MCF 10A (cell line): ENCODE measurements at regions of chr3 and their contacts with region 1.

Region 1: GRCh38 chr3:141460097-141460704 is 26.6 kb upstream of the RASA2 start:
- DNase-seq: peak; percentile 88
- H3K4me3 Mint-ChIP-seq: no peak overlapping the region
- H3K27ac Mint-ChIP-seq: no peak overlapping the region
- H3K4me1 Mint-ChIP-seq: no peaks in the 10 kb centered on the region
- H3K27me3 Mint-ChIP-seq: no peaks in the 10 kb centered on the region
- CTCF ChIP-seq: peak; percentile 89

Region 2: GRCh38 chr3:141223673-141224166 is 236.5 kb before region 1 on chr3:
- CTCF ChIA-PET with region 1: no interaction called
- POLR2A ChIA-PET with region 1: no interaction called
- intact Hi-C with region 1: no loop called
- DNase-seq: no peak
- H3K4me3 Mint-ChIP-seq: no peak overlapping the region
- H3K27ac Mint-ChIP-seq: no peak overlapping the region
- H3K4me1 Mint-ChIP-seq: no peaks in the 10 kb centered on the region
- H3K27me3 Mint-ChIP-seq: no peaks in the 10 kb centered on the region
- CTCF ChIP-seq: no peak

Region 3: DNA sequence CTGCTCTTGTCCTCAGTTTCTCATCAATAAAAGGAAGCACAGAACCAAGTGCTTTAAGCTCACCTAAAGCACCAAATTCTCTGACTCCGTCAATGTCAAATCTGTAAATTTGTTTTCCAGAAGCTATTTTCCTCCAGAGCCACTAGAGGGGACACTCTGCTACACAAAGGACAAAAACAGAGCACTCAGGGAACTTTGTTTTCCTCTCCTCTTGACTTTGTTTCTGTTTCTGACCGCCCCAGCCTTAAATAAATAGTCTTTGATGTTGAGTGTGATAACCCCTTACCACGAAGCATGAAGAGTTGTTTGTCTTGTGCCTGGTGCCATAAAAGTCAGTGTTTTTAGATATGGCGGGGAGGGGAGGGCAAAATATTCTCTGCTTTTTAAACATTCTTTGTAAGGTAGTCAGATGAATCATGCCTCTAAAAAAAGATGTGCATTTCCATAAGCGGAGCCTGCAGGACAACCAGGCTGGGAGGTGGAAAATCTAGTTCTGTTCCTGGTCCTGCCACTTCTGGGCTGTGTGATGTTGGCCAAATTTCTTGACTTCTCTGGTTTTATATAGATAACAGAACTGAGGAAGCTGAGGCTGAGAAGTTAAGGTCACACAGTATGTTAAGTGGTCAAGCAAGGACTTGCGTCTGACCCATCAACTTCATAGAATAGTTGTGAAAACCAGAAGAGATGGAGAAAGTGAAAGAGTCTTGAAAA is 99.2 kb before region 1 on chr3:
- CTCF ChIA-PET with region 1: interaction called, 166 read pairs
- POLR2A ChIA-PET with region 1: interaction called, 17 read pairs
- intact Hi-C with region 1: no loop called
- DNase-seq: peak; percentile 83
- H3K4me3 Mint-ChIP-seq: peak overlapping the region; percentile 30
- H3K27ac Mint-ChIP-seq: peak overlapping the region; percentile 74
- H3K4me1 Mint-ChIP-seq: peaks cover 23% of the 10 kb centered on the region
- H3K27me3 Mint-ChIP-seq: no peaks in the 10 kb centered on the region
- CTCF ChIP-seq: peak; percentile 77

Region 4: GRCh38 chr3:141493184-141493583 is 33.0 kb after region 1 on chr3:
- CTCF ChIA-PET with region 1: interaction called, 16 read pairs
- POLR2A ChIA-PET with region 1: no interaction called
- intact Hi-C with region 1: no loop called
- DNase-seq: no peak
- H3K4me3 Mint-ChIP-seq: no peak overlapping the region
- H3K27ac Mint-ChIP-seq: no peak overlapping the region
- H3K4me1 Mint-ChIP-seq: peaks cover 25% of the 10 kb centered on the region
- H3K27me3 Mint-ChIP-seq: no peaks in the 10 kb centered on the region
- CTCF ChIP-seq: no peak

Region 5: DNA sequence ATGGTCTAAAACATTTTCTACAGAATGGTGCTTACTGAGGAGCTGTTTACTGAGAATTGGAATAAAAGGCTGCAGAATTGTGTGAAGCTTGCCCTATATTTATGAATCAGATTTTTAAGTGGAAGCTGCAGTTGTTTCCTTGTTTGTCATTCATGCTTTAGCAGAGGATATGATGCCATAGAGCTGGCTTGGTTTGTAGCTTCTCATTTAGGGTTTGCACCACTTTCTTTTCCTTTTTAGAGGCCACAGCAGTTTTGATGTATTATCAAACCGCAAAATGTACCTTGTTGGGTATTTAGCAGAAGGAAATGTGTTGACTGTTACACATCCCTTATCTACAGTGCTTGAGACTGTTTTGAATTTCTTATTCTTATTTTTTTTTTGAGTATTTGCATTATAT is 92.9 kb after region 1 on chr3:
- CTCF ChIA-PET with region 1: interaction called, 342 read pairs
- POLR2A ChIA-PET with region 1: interaction called, 6 read pairs
- intact Hi-C with region 1: no loop called
- DNase-seq: no peak
- H3K4me3 Mint-ChIP-seq: no peak overlapping the region
- H3K27ac Mint-ChIP-seq: no peak overlapping the region
- H3K4me1 Mint-ChIP-seq: no peaks in the 10 kb centered on the region
- H3K27me3 Mint-ChIP-seq: no peaks in the 10 kb centered on the region
- CTCF ChIP-seq: no peak

Region 6: DNA sequence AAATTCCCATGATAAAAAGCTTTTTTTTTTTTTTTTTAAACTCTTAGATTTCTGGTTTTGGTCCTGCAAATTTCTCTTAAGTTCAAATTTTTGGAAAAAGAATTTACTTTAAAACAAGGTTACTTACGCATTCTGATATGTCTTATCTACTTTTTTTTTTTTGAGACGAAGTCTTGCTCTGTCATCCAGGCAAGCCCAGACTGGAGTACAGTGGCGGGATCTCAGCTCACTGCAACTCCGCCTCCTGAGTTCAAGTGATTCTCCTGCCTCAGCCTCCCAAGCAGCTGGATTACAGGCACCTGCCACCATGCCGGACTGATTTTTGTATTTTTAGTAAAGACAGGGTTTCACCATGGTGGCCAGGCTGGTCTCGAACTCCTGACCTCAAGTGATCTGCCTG is 109.9 kb after region 1 on chr3:
- CTCF ChIA-PET with region 1: interaction called, 342 read pairs
- POLR2A ChIA-PET with region 1: interaction called, 3 read pairs
- intact Hi-C with region 1: no loop called
- DNase-seq: no peak
- H3K4me3 Mint-ChIP-seq: no peak overlapping the region
- H3K27ac Mint-ChIP-seq: no peak overlapping the region
- H3K4me1 Mint-ChIP-seq: no peaks in the 10 kb centered on the region
- H3K27me3 Mint-ChIP-seq: no peaks in the 10 kb centered on the region
- CTCF ChIP-seq: no peak

Region 7: DNA sequence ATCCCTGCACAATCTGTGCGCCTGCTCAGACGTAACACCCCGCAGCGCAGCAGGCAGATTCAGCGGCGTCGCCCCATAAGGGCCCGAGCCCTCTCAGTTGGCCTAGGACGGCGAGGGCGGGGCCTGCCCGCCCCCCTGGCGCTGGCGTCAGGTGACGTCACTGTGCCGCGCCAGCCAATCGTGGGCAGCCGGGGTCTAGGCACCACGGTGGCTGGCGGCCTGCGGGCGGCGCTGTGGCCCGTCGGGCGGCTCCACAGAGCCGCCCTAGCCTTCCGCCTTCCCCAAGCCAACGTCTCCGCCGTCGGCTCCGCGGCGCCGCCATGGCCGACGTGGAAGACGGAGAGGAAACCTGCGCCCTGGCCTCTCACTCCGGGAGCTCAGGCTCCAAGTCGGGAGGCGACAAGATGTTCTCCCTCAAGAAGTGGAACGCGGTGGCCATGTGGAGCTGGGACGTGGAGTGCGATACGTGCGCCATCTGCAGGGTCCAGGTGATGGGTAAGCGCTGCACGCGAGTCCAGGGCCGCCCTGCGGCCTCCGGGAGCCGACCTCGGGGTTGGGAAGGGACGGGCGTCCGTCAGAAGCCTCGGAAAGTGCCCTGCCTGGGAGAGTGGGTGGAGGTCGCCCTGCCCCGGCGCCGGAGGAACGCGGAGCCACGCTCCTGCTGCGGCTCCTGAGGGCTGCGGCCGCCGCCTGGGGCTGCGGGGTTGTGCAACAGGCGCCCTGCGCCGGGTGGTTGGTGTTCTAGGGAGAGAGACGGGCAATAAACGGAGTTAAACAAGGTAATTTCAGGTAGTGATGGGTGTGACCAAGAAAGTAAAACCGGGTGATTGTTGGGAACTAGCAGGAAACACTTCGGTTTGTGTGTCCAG is 278.1 kb after region 1 on chr3 and contains the start of gene RNF7:
- CTCF ChIA-PET with region 1: no interaction called
- POLR2A ChIA-PET with region 1: no interaction called
- intact Hi-C with region 1: loop called (anchors 1 kb)
- DNase-seq: peak; percentile 96
- H3K4me3 Mint-ChIP-seq: peak within 1 kb of the TSS; percentile 90
- H3K27ac Mint-ChIP-seq: peak within 1 kb of the TSS; percentile 98
- H3K4me1 Mint-ChIP-seq: peaks cover 18% of the 10 kb centered on the region
- H3K27me3 Mint-ChIP-seq: peaks cover 10% of the 10 kb centered on the region
- CTCF ChIP-seq: peak; percentile 85
- total RNA-seq, gene RNF7: 96.1 and 112 TPM in 2 replicates

Region 8: GRCh38 chr3:141998669-141999290 is 538.6 kb after region 1 on chr3:
- CTCF ChIA-PET with region 1: interaction called, 3 read pairs
- POLR2A ChIA-PET with region 1: interaction called, 3 read pairs
- intact Hi-C with region 1: loop called (anchors 1 kb)
- DNase-seq: peak; percentile 23
- H3K4me3 Mint-ChIP-seq: no peak overlapping the region
- H3K27ac Mint-ChIP-seq: no peak overlapping the region
- H3K4me1 Mint-ChIP-seq: no peaks in the 10 kb centered on the region
- H3K27me3 Mint-ChIP-seq: no peaks in the 10 kb centered on the region
- CTCF ChIP-seq: peak; percentile 35